Common myeloid progenitor, CD34-positive (primary cell): ENCODE measurements at regions of chr14 and their contacts with region 1.

Region 1: GRCh38 chr14:64510825-64511671 is 6.5 kb downstream of the ZBTB1 start:
- DNase-seq: peak; percentile 73 to 80 (median 74)
- H3K4me3 ChIP-seq: peak overlapping the region in 1 of 7 experiments; percentile 37
- H3K27ac ChIP-seq: peak overlapping the region in 1 of 2 experiments; percentile 38
- H3K4me1 ChIP-seq: peaks cover 19 to 53% (median 46%) of the 10 kb centered on the region in 4 experiments
- H3K27me3 ChIP-seq: no peaks in the 10 kb centered on the region

Region 2: GRCh38 chr14:64496764-64497163 is 14.3 kb before region 1 on chr14:
- CTCF ChIA-PET with region 1: interaction called, 14 read pairs
- POLR2A ChIA-PET with region 1: no interaction called
- DNase-seq: no peak
- H3K4me3 ChIP-seq: no peak overlapping the region
- H3K27ac ChIP-seq: no peak overlapping the region
- H3K4me1 ChIP-seq: peaks cover 7 to 19% (median 13%) of the 10 kb centered on the region in 4 experiments
- H3K27me3 ChIP-seq: no peaks in the 10 kb centered on the region

Region 3: DNA sequence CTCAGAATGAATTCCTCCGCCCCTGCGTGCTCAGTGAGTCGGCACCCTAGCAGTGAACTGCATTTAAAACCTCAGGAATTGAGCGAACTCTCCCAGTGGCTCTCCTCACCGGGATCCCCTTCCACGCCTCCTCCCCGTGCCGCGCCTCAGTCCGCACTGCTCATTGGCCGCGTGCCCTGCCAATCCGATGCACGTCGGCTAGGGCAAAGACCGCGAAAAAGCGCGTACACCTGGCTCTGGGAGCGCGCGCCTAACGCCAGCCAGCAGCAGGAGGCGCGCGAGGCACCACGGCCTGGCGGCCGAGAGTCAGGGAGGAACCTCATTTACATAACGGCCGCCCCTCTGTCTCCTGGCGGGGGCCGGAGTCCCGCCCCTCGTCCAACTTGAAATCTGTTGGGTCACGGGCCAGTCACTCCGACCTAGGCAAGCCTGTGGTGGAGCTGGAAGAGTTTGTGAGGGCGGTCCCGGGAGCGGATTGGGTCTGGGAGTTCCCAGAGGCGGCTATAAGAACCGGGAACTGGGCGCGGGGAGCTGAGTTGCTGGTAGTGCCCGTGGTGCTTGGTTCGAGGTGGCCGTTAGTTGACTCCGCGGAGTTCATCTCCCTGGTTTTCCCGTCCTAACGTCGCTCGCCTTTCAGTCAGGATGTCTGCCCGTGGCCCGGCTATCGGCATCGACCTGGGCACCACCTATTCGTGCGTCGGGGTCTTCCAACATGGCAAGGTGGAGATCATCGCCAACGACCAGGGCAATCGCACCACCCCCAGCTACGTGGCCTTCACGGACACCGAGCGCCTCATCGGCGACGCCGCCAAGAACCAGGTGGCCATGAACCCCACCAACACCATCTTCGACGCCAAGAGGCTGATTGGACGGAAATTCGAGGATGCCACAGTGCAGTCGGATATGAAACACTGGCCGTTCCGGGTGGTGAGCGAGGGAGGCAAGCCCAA is 29.4 kb after region 1 on chr14 and contains the start of gene HSPA2:
- CTCF ChIA-PET with region 1: no interaction called
- POLR2A ChIA-PET with region 1: no interaction called
- DNase-seq: peak; percentile 98 to 99 (median 99)
- H3K4me3 ChIP-seq: peak within 1 kb of the TSS; percentile 64 to 88 (median 74)
- H3K27ac ChIP-seq: peak within 1 kb of the TSS in 1 of 2 experiments; percentile 31
- H3K4me1 ChIP-seq: peaks cover 0 to 21% (median 21%) of the 10 kb centered on the region in 4 experiments
- H3K27me3 ChIP-seq: peaks cover 9 to 60% (median 34%) of the 10 kb centered on the region in 5 experiments